Naive thymus-derived CD4-positive, alpha-beta T cell (primary cell): ENCODE measurements at regions of chr1 and their contacts with region 1.

Region 1: GRCh38 chr1:114346480-114347029 is 164.4 kb downstream of the TRIM33 start:
- DNase-seq: peak; percentile 91 to 99 (median 98)
- ATAC-seq: peak; percentile 100
- H3K4me3 ChIP-seq: peak overlapping the region; percentile 65
- H3K4me3 Mint-ChIP-seq: peak overlapping the region; percentile 89 to 98 (median 92)
- H3K27ac ChIP-seq: peak overlapping the region; percentile 53
- H3K27ac Mint-ChIP-seq: peak overlapping the region; percentile 86 to 99 (median 91)
- H3K4me1 ChIP-seq: peaks cover 29 to 38% of the 10 kb centered on the region in 2 donors
- H3K4me1 Mint-ChIP-seq: peaks cover 23 to 46% (median 33%) of the 10 kb centered on the region in 7 donors
- H3K27me3 ChIP-seq: no peaks in the 10 kb centered on the region
- H3K27me3 Mint-ChIP-seq: no peaks in the 10 kb centered on the region

Region 2: DNA sequence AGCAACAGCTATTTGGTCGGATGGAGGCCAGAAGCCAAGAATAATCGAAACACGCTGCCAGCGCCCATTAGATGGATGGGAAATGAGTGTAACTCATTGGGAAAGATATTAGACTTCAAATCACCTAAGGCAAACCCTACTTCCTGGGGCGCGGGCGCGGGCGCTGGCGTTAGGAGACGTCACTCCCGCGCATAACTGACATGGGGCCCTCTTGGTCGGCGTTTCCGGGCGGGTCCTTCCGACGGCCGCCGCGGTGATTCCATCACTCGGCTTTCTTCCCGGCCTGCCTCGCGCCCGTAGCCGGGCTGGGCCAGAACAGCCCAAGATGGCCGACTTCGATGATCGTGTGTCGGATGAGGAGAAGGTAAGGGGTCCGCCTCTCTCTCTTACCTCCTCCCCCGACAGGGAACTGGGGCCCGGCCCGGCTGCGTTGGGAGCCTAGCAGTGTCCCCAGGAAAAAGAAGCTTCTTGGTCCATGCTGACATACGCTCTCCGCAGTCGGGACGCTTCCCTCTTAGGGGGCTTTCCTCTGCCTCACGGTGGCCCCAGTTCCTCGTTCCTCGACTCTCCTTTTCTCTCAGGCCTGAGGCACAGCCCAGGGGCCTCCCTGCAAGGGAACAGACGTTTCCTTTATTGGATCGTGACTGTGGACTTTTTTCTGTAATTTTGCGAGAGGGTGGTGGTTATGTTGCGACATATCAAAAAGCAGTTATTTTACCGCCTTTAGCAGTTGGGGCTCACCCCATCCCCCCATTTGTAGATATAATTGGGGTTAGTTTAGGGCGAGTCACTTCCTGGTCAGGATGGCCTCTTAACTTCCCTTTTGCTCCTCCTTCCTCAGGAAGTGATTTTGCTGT is 1726.8 kb before region 1 on chr1 and contains the start of gene CAPZA1:
- CTCF ChIA-PET with region 1: no interaction called
- POLR2A ChIA-PET with region 1: no interaction called
- intact Hi-C with region 1: loop called in 1 of 2 experiments (anchors 1 kb)
- DNase-seq: peak; percentile 83 to 93 (median 91)
- ATAC-seq: peak; percentile 89
- H3K4me3 ChIP-seq: peak within 1 kb of the TSS; percentile 93
- H3K4me3 Mint-ChIP-seq: peak within 1 kb of the TSS; percentile 98 to 100 (median 99)
- H3K27ac ChIP-seq: peak within 1 kb of the TSS; percentile 100
- H3K27ac Mint-ChIP-seq: peak within 1 kb of the TSS; percentile 99 to 100 (median 100)
- H3K4me1 ChIP-seq: peaks cover 19 to 21% of the 10 kb centered on the region in 2 donors
- H3K4me1 Mint-ChIP-seq: peaks cover 27 to 55% (median 46%) of the 10 kb centered on the region in 7 donors
- H3K27me3 ChIP-seq: no peaks in the 10 kb centered on the region
- H3K27me3 Mint-ChIP-seq: peaks cover 0 to 1% (median 0%) of the 10 kb centered on the region in 5 donors
- total RNA-seq, gene CAPZA1: 114 to 237 (median 143) TPM

Region 3: DNA sequence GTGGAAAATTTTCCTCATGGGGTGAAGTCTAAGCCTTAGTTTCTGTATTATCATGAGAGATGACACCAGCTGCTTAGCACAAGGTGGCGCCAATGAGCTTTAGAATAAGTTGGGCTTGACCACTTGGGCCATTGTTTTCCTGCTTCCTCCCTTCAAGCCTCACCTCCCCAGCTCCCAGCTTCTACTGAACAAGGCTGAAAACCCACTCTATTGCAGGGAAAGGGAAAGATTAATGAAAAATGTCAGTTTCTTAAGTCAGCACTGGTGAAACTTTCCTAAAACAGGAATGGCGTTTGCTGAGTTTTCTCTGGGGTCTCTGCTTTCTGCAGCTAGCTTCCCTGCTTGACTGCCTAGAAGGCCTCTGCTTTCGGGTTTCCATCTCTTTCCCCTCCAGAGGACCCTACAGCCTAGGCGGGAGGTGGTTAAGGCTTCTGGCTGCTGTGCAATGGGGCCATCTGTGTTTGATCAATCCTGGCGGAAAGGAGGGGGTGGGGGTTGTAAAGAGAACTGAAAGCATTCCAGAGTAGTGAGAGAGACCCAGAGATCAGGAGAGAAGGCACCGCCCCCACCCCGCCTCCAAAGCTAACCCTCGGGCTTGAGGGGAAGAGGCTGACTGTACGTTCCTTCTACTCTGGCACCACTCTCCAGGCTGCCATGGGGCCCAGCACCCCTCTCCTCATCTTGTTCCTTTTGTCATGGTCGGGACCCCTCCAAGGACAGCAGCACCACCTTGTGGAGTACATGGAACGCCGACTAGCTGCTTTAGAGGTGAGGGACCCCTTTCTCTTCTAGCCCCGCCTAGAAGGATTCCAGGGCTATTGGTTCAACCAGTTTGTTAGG is 367.5 kb before region 1 on chr1 and contains the start of gene OLFML3:
- CTCF ChIA-PET with region 1: interaction called, 3 read pairs
- POLR2A ChIA-PET with region 1: no interaction called
- intact Hi-C with region 1: loop called in 1 of 2 experiments (anchors 10 kb)
- DNase-seq: peak in 5 of 9 donors; percentile 11 to 28 (median 17)
- ATAC-seq: peak; percentile 60
- H3K4me3 ChIP-seq: no peak within 1 kb of the TSS
- H3K4me3 Mint-ChIP-seq: no peak within 1 kb of the TSS
- H3K27ac ChIP-seq: no peak within 1 kb of the TSS
- H3K27ac Mint-ChIP-seq: peak within 1 kb of the TSS in 7 of 9 donors; percentile 31 to 48 (median 40)
- H3K4me1 ChIP-seq: peaks cover 0 to 11% of the 10 kb centered on the region in 2 donors
- H3K4me1 Mint-ChIP-seq: peaks cover 24 to 49% (median 35%) of the 10 kb centered on the region in 7 donors
- H3K27me3 ChIP-seq: no peaks in the 10 kb centered on the region
- H3K27me3 Mint-ChIP-seq: no peaks in the 10 kb centered on the region
- total RNA-seq, gene OLFML3: 0.24 to 1.8 (median 1.1) TPM

Region 4: DNA sequence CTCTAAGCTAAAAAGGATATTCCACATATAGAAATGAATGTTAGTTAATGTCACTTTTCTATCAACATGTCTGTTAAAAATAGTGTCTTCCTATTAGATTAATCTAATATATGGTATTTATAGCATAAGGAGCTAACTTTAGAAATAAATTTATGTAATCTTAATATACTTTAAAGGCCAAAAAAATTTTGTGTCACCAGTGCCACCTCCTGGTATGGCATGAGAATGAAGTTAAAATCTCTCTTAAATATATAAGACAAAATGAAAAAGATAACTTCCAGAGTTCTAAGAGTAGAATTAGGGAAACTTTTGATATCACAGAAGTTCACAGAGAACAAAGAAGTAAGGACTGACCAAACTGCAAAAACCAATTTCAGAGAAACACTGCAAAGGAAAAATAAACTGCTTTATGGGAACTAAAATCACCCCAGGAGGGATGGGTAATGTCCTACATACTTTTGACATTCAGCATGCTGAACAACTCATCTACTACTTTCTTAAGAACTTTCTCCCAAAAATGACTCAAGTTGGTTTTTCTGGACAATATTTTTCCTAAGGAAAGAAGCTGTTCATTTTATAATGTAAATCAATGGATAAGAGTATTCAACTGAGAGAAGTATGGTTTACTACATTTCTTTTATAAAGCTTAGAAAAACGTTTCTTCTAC is 81.7 kb after region 1 on chr1:
- CTCF ChIA-PET with region 1: interaction called, 18 read pairs
- POLR2A ChIA-PET with region 1: no interaction called
- intact Hi-C with region 1: loop called (anchors 1 kb)
- DNase-seq: peak in 6 of 9 donors; percentile 8 to 26 (median 16)
- ATAC-seq: no peak
- H3K4me3 ChIP-seq: no peak overlapping the region
- H3K4me3 Mint-ChIP-seq: no peak overlapping the region
- H3K27ac ChIP-seq: no peak overlapping the region
- H3K27ac Mint-ChIP-seq: no peak overlapping the region
- H3K4me1 ChIP-seq: no peaks in the 10 kb centered on the region
- H3K4me1 Mint-ChIP-seq: peaks cover 0 to 6% (median 0%) of the 10 kb centered on the region in 7 donors
- H3K27me3 ChIP-seq: no peaks in the 10 kb centered on the region
- H3K27me3 Mint-ChIP-seq: no peaks in the 10 kb centered on the region

Region 5: GRCh38 chr1:114670083-114671010 is 323.8 kb after region 1 on chr1:
- CTCF ChIA-PET with region 1: interaction called, 6 read pairs
- POLR2A ChIA-PET with region 1: no interaction called
- intact Hi-C with region 1: loop called (anchors 1 kb)
- DNase-seq: peak; percentile 60 to 84 (median 76)
- ATAC-seq: peak; percentile 99
- H3K4me3 ChIP-seq: peak overlapping the region; percentile 77
- H3K4me3 Mint-ChIP-seq: peak overlapping the region; percentile 84 to 98 (median 96)
- H3K27ac ChIP-seq: peak overlapping the region; percentile 45
- H3K27ac Mint-ChIP-seq: peak overlapping the region in 7 of 9 donors; percentile 58 to 91 (median 82)
- H3K4me1 ChIP-seq: no peaks in the 10 kb centered on the region
- H3K4me1 Mint-ChIP-seq: peaks cover 0 to 16% (median 9%) of the 10 kb centered on the region in 7 donors
- H3K27me3 ChIP-seq: no peaks in the 10 kb centered on the region
- H3K27me3 Mint-ChIP-seq: peaks cover 2 to 60% (median 14%) of the 10 kb centered on the region in 5 donors

Region 6: DNA sequence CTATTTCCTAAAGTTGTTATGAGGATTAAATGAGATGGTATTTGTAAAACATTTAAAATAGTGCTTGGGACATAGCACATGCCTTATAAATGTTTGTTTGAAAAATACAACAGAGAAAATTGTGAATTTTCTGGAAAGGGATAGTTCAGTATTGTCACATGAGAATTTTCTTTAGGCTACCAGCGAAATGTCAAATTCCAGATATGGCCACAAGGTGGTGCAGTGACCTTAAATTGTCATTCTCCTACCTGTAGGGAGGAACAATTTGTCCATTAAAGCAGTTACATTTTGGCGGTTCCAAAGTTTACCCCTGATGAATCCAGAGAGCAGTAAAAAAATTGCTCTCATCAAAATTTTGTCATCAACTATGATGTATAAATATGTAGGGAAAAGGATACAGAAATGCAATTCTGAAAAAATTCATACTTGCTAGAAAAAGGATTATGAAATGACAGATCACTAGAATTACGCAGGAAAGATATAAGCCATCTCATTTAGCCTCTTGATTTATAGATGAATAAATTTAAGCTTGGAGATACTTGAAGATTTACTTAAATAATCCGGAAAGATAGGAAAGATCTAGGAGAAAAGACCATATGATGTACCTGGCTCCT is 632.8 kb after region 1 on chr1:
- CTCF ChIA-PET with region 1: interaction called, 3 read pairs
- POLR2A ChIA-PET with region 1: no interaction called
- intact Hi-C with region 1: loop called in 1 of 2 experiments (anchors 2 kb)
- DNase-seq: peak; percentile 32 to 69 (median 56)
- ATAC-seq: peak; percentile 76
- H3K4me3 ChIP-seq: no peak overlapping the region
- H3K4me3 Mint-ChIP-seq: no peak overlapping the region
- H3K27ac ChIP-seq: no peak overlapping the region
- H3K27ac Mint-ChIP-seq: no peak overlapping the region
- H3K4me1 ChIP-seq: no peaks in the 10 kb centered on the region
- H3K4me1 Mint-ChIP-seq: no peaks in the 10 kb centered on the region
- H3K27me3 ChIP-seq: no peaks in the 10 kb centered on the region
- H3K27me3 Mint-ChIP-seq: peaks cover 5 to 23% (median 14%) of the 10 kb centered on the region in 5 donors

Region 7: GRCh38 chr1:116133696-116134650 is 1787.4 kb after region 1 on chr1:
- CTCF ChIA-PET with region 1: no interaction called
- POLR2A ChIA-PET with region 1: no interaction called
- intact Hi-C with region 1: no loop called
- DNase-seq: no peak
- ATAC-seq: no peak
- H3K4me3 ChIP-seq: no peak overlapping the region
- H3K4me3 Mint-ChIP-seq: no peak overlapping the region
- H3K27ac ChIP-seq: no peak overlapping the region
- H3K27ac Mint-ChIP-seq: no peak overlapping the region
- H3K4me1 ChIP-seq: peaks cover 0 to 3% of the 10 kb centered on the region in 2 donors
- H3K4me1 Mint-ChIP-seq: peaks cover 6 to 12% (median 10%) of the 10 kb centered on the region in 7 donors
- H3K27me3 ChIP-seq: no peaks in the 10 kb centered on the region
- H3K27me3 Mint-ChIP-seq: peaks cover 0 to 9% (median 5%) of the 10 kb centered on the region in 5 donors